ENCODE measurements at regions of chr3 and their contacts with region 1.

Region 1: GRCh38 chr3:12423918-12424630 is 60.2 kb upstream of the TSEN2 start:
- DNase-seq: peak; percentile 68
- ATAC-seq: peak; percentile 62
- H3K4me3 ChIP-seq: no peak overlapping the region
- H3K27ac ChIP-seq: peak overlapping the region; percentile 91
- H3K4me1 ChIP-seq: peaks cover 51% of the 10 kb centered on the region
- H3K27me3 ChIP-seq: no peaks in the 10 kb centered on the region
- CTCF ChIP-seq: no peak

Region 2: GRCh38 chr3:12384451-12385233 is 39.4 kb before region 1 on chr3:
- CTCF ChIA-PET with region 1: no interaction called
- POLR2A ChIA-PET with region 1: no interaction called
- intact Hi-C with region 1: loop called (anchors 5 kb)
- DNase-seq: no peak
- ATAC-seq: no peak
- H3K4me3 ChIP-seq: no peak overlapping the region
- H3K27ac ChIP-seq: peak overlapping the region; percentile 10
- H3K4me1 ChIP-seq: peaks cover 44% of the 10 kb centered on the region
- H3K27me3 ChIP-seq: no peaks in the 10 kb centered on the region
- CTCF ChIP-seq: no peak